PC-3 (cell line): ENCODE measurements at regions of chr5 and their contacts with region 1.

Region 1: DNA sequence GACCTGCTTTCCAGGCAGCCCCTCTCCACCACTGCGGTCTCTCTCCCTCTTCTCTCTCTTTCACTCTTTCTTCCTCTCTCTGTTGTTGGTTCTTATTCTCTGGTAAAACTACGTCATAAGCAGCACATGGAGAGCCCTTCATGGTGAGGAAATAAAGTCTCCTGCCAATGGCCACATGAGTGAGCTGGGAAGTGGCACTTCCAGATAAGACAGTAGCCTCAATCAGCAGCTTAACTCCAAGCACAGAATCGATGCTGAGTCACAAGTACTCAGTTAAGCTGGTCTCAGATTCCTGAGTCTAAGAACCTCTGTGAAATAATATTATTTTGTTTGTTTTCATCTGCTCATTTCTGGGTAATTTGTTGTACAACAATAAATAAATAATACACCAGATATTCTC is 500.1 kb downstream of the GABRG2 start:
- DNase-seq: no peak
- ATAC-seq: no peak
- H3K4me3 ChIP-seq: no peak overlapping the region
- H3K27ac ChIP-seq: no peak overlapping the region
- H3K4me1 ChIP-seq: no peaks in the 10 kb centered on the region
- H3K27me3 ChIP-seq: no peaks in the 10 kb centered on the region
- CTCF ChIP-seq: no peak

Region 2: DNA sequence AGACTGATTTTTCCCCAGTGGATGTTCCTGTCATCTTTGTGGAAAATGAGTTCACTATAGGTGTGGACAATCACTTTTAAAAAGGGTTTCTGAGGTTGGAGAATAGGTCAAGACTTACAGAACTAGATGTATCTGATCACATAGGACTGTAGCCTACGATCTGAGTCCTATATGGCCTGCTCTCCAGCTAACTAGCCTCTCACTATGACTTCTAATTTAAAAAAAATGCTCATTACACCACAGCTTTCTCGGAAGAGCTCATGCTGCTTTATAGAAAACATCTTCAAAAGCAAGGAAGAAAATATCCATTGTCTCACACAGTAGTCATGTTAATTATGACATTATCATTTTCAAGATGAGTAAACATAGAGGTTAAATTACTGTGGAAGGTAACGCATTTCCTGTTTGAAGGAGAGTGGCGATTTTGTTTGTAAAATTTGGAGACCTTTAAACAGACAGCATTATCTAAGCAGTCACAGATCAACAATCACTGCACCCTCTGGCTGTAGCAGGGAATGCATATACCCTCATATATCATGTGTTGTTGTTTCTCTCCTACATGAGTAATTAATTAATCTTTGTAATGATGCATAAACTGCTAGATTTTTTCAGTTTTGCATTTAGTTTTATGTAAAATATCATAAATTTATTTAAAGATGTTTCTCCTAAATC is 73.6 kb after region 1 on chr5:
- CTCF ChIA-PET with region 1: no interaction called
- POLR2A ChIA-PET with region 1: no interaction called
- intact Hi-C with region 1: no loop called
- DNase-seq: no peak
- ATAC-seq: no peak
- H3K4me3 ChIP-seq: no peak overlapping the region
- H3K27ac ChIP-seq: no peak overlapping the region
- H3K4me1 ChIP-seq: no peaks in the 10 kb centered on the region
- H3K27me3 ChIP-seq: no peaks in the 10 kb centered on the region
- CTCF ChIP-seq: no peak

Region 3: DNA sequence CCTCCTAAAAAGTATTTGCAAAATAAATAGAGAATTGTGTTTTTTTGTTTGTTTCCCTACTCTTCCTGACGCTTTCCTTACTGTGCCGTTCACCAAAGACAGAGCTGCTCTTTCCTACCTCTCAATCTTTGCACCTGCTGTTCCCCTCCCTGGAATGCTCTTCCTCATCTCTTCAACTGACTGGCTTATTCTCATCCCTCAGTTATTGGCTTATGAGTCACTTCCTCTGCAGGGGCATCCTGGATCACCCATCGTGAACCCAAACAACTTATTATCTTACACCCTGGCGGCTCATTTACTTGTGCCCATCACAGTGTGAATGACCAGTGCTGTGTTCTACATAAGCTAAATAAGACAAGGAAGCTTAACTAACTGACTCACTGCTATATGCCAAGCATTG is 833.6 kb after region 1 on chr5:
- CTCF ChIA-PET with region 1: no interaction called
- POLR2A ChIA-PET with region 1: interaction called, 10 read pairs
- intact Hi-C with region 1: no loop called
- DNase-seq: peak; percentile 28
- ATAC-seq: peak; percentile 55
- H3K4me3 ChIP-seq: no peak overlapping the region
- H3K27ac ChIP-seq: no peak overlapping the region
- H3K4me1 ChIP-seq: no peaks in the 10 kb centered on the region
- H3K27me3 ChIP-seq: no peaks in the 10 kb centered on the region
- CTCF ChIP-seq: no peak